B cell (primary cell): ENCODE measurements at regions of chr20 and their contacts with region 1.

Region 1: DNA sequence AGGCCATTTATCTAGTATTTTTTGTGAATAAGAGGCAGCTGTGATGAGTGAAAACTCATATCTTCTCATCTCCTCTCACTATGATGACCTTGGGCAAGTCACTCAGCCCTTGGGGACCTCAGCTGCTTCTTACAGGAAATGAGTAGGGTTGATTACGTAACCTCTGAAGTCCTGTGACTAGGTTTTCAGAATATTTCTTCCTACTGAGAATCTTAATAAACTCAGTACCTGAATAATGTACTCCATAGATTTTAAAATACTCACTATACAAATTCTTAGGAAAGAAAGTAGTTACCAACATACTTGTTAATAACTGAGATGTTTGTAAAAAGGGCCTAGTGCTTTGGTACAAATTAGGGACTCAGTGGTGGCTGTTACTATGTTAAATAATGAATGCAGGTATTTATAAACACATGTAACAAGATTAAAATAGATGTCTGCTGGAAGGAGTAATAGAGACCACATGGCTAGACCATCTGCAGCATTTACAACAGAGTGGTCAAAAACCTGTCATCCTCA is 60.9 kb downstream of the RPRD1B start:
- DNase-seq: peak; percentile 86
- ATAC-seq: peak; percentile 68
- H3K4me3 ChIP-seq: peak overlapping the region in 1 of 5 experiments; percentile 21
- H3K4me3 Mint-ChIP-seq: peak overlapping the region; percentile 77
- H3K27ac ChIP-seq: peak overlapping the region; percentile 95 to 96
- H3K27ac Mint-ChIP-seq: peak overlapping the region; percentile 98
- H3K4me1 ChIP-seq: peaks cover 53 to 60% of the 10 kb centered on the region in 2 donors
- H3K4me1 Mint-ChIP-seq: peaks cover 72% of the 10 kb centered on the region
- H3K27me3 ChIP-seq: no peaks in the 10 kb centered on the region
- H3K27me3 Mint-ChIP-seq: no peaks in the 10 kb centered on the region
- CTCF ChIP-seq: no peak

Region 2: GRCh38 chr20:38113401-38114325 is 19.2 kb after region 1 on chr20:
- CTCF ChIA-PET with region 1: interaction called, 12 read pairs
- POLR2A ChIA-PET with region 1: interaction called, 3 read pairs
- intact Hi-C with region 1: no loop called
- DNase-seq: no peak
- ATAC-seq: no peak
- H3K4me3 ChIP-seq: no peak overlapping the region
- H3K4me3 Mint-ChIP-seq: no peak overlapping the region
- H3K27ac ChIP-seq: no peak overlapping the region
- H3K27ac Mint-ChIP-seq: no peak overlapping the region
- H3K4me1 ChIP-seq: peaks cover 0 to 3% of the 10 kb centered on the region in 2 donors
- H3K4me1 Mint-ChIP-seq: peaks cover 3% of the 10 kb centered on the region
- H3K27me3 ChIP-seq: no peaks in the 10 kb centered on the region
- H3K27me3 Mint-ChIP-seq: no peaks in the 10 kb centered on the region
- CTCF ChIP-seq: no peak

Region 3: GRCh38 chr20:38165089-38165989 is 70.9 kb after region 1 on chr20 and contains the start of gene TGM2:
- CTCF ChIA-PET with region 1: interaction called, 9 read pairs
- POLR2A ChIA-PET with region 1: no interaction called
- intact Hi-C with region 1: loop called (anchors 1 kb)
- DNase-seq: peak; percentile 82
- ATAC-seq: peak; percentile 95
- H3K4me3 ChIP-seq: peak within 1 kb of the TSS in 4 of 5 experiments; percentile 18 to 44 (median 32)
- H3K4me3 Mint-ChIP-seq: peak within 1 kb of the TSS; percentile 64
- H3K27ac ChIP-seq: no peak within 1 kb of the TSS
- H3K27ac Mint-ChIP-seq: peak within 1 kb of the TSS; percentile 82
- H3K4me1 ChIP-seq: peaks cover 18 to 28% of the 10 kb centered on the region in 2 donors
- H3K4me1 Mint-ChIP-seq: peaks cover 29% of the 10 kb centered on the region
- H3K27me3 ChIP-seq: peaks cover 0 to 7% (median 0%) of the 10 kb centered on the region in 4 experiments
- H3K27me3 Mint-ChIP-seq: no peaks in the 10 kb centered on the region
- CTCF ChIP-seq: peak; percentile 83
- total RNA-seq, gene TGM2: 58.8 and 60.8 TPM in 2 replicates